Tibial artery (tissue), 4 donors: ENCODE measurements at regions of chr18 and their contacts with region 1.

Region 1: GRCh38 chr18:48590678-48591077 is 51.8 kb downstream of the CTIF start:
- DNase-seq: peak in 1 of 2 donors; percentile 79
- H3K4me3 ChIP-seq: no peak overlapping the region
- H3K27ac ChIP-seq: peak overlapping the region; percentile 72 to 77
- H3K4me1 ChIP-seq: peaks cover 0 to 78% (median 44%) of the 10 kb centered on the region in 4 donors
- H3K27me3 ChIP-seq: no peaks in the 10 kb centered on the region
- CTCF ChIP-seq: no peak

Region 2: DNA sequence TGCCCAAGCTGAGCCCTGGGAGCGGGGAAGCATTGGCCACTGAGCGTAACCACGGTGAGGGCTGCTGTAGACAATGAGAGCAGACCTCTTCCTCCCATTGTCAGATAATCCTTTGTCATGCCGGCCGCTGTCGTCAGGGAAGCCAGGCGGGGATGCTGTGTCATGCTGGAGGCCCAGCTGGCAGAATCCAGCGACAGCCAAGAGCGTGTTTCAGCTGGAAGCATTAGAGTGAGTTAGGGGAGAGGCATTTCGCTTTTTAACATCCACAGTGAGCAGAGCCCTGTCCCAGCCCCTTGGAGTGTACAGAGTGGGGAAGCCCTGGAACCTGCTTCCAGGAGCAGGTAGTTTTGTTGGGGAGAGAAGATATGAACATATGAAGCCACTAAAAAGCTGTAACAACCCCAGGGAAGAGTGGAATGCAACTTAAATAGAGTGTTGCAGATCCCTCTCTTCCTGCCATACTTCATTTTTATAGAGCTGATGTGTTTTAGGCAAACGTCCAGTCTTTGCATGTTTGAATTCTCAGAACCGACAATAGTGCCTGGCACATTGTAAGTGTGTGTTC is 44.8 kb before region 1 on chr18:
- intact Hi-C with region 1: loop called (anchors 5 kb)
- DNase-seq: peak; percentile 49 to 83
- H3K4me3 ChIP-seq: no peak overlapping the region
- H3K27ac ChIP-seq: peak overlapping the region; percentile 73 to 78
- H3K4me1 ChIP-seq: peaks cover 11 to 92% (median 65%) of the 10 kb centered on the region in 4 donors
- H3K27me3 ChIP-seq: no peaks in the 10 kb centered on the region
- CTCF ChIP-seq: no peak

Region 3: GRCh38 chr18:48620071-48620470 is 29.4 kb after region 1 on chr18:
- intact Hi-C with region 1: loop called (anchors 1 kb)
- DNase-seq: no peak
- H3K4me3 ChIP-seq: no peak overlapping the region
- H3K27ac ChIP-seq: peak overlapping the region in 1 of 2 donors; percentile 13
- H3K4me1 ChIP-seq: peaks cover 0 to 62% (median 48%) of the 10 kb centered on the region in 4 donors
- H3K27me3 ChIP-seq: no peaks in the 10 kb centered on the region
- CTCF ChIP-seq: no peak

Region 4: DNA sequence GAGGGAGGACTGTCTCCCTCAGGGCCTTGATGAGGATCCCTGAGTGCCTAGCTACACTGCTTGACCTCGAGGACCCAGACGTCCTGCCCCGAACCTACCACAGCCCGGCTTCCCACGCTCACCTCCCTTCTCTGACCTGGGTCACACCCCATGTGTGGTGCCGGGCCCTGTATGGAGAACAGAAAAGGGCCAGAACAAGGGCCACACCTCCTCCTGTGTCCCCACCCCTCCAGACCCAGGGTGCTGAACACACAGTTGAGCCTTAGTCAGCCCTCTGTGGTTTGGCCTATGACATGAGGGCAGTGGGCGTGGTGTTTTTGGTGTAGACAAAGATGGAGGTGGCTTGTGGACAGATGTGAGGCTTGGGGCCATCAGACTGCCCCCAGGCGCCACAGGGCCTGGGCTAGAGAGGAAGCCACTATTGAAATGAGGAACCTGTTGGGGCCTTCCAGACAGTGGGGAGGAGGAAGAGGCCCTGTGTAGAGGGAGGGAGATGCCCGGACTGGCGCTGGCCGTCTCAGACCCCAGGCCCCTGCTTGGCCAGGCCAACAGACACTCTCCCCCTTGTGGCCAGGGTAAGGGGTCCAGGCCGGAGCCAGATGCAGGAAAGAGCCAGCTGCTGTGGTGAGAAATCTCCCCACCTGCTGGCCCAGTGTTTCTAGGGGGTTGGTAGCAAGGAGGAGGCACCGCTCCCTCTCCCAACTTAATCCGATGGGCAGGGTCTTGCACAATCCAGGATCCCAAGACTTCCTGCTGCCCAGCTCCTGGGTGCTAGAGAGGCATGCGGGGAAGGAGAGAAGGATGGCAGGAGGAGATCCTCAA is 306.2 kb after region 1 on chr18:
- intact Hi-C with region 1: no loop called
- DNase-seq: peak; percentile 82 to 86
- H3K4me3 ChIP-seq: no peak overlapping the region
- H3K27ac ChIP-seq: peak overlapping the region; percentile 64 to 65
- H3K4me1 ChIP-seq: peaks cover 0 to 43% (median 29%) of the 10 kb centered on the region in 4 donors
- H3K27me3 ChIP-seq: no peaks in the 10 kb centered on the region
- CTCF ChIP-seq: no peak

Region 5: GRCh38 chr18:49006641-49007454 is 416.2 kb after region 1 on chr18:
- intact Hi-C with region 1: no loop called
- DNase-seq: no peak
- H3K4me3 ChIP-seq: no peak overlapping the region
- H3K27ac ChIP-seq: no peak overlapping the region
- H3K4me1 ChIP-seq: no peaks in the 10 kb centered on the region
- H3K27me3 ChIP-seq: no peaks in the 10 kb centered on the region
- CTCF ChIP-seq: no peak